Activated CD8-positive, alpha-beta memory T cell treated with anti-CD3 and anti-CD28 coated beads, Interleukin-2, amount 10 ng/mL, durations not matched to agents 7 days and 5 days (primary cell): ENCODE measurements at regions of chr3 and their contacts with region 1.

Region 1: DNA sequence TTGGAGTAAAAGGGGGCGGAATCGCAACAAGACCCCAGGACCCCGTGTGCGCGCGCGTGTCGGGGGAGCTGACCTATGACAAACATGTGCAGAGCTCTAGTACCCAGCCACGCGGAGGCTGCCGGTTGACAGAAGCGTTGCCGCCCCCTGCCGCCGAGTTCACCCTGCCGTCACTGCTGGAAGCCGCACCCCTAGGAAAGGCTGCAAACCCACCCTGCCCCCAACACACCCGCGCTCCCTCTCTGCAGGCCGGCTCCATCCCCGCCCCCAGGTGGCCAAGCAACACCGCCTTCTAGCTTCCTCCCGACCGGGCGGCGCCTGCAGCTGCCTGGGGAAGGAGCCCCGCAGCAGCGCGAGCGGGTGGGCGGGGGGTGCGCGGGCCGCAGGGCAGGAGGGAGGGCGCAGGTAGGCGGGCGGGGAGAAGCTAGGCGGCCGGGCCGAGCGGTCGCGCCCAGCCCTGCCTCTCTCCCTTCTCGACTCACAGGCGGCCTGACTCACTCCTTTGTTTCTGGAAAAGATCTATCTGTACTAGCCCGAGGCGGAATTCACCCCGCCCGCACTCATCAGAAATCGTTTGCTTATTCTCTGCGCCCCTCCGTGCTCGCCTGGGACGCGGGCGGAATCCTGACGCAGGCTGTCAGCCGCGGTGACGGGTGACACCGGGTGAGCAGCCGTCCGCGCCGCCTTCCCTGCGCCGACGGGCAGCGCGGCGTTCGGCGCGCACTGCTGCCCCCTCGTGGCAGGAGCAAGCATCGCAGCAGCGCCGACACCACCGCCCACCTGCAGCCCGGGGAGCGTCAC is 160.8 kb downstream of the GAP43 start:
- DNase-seq: peak; percentile 94
- ATAC-seq: peak; percentile 90
- H3K4me3 Mint-ChIP-seq: peak overlapping the region; percentile 75
- H3K27ac Mint-ChIP-seq: peak overlapping the region; percentile 95
- H3K4me1 Mint-ChIP-seq: peaks cover 13% of the 10 kb centered on the region
- H3K27me3 Mint-ChIP-seq: peaks cover 4% of the 10 kb centered on the region

Region 2: GRCh38 chr3:115658337-115659181 is 125.6 kb before region 1 on chr3:
- CTCF ChIA-PET with region 1: interaction called, 10 read pairs
- DNase-seq: peak; percentile 81
- ATAC-seq: peak; percentile 92
- H3K4me3 Mint-ChIP-seq: peak overlapping the region; percentile 89
- H3K27ac Mint-ChIP-seq: peak overlapping the region; percentile 91
- H3K4me1 Mint-ChIP-seq: peaks cover 33% of the 10 kb centered on the region
- H3K27me3 Mint-ChIP-seq: peaks cover 5% of the 10 kb centered on the region

Region 3: GRCh38 chr3:115727135-115727534 is 57.0 kb before region 1 on chr3:
- CTCF ChIA-PET with region 1: no interaction called
- DNase-seq: no peak
- ATAC-seq: no peak
- H3K4me3 Mint-ChIP-seq: no peak overlapping the region
- H3K27ac Mint-ChIP-seq: no peak overlapping the region
- H3K4me1 Mint-ChIP-seq: peaks cover 3% of the 10 kb centered on the region
- H3K27me3 Mint-ChIP-seq: peaks cover 20% of the 10 kb centered on the region

Region 4: DNA sequence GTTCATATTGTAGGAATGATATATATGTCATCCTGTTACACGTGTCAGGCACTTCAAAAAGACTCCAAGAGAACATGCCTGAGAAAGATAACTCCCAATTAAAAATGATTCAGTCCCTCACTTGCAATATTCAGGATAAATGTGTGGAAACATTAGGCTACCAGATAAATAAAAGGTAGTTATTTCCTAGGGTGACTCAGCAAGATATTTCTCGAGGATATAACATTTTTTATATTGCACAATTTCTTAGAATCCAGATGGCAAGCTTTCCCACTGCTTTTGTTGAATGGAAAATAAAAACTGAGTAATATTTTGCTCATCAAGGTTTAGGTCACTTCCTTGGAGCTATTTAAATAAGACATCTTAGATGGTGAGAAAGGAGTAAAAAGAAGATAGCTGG is 20.6 kb after region 1 on chr3:
- CTCF ChIA-PET with region 1: interaction called, 14 read pairs
- DNase-seq: no peak
- ATAC-seq: no peak
- H3K4me3 Mint-ChIP-seq: no peak overlapping the region
- H3K27ac Mint-ChIP-seq: no peak overlapping the region
- H3K4me1 Mint-ChIP-seq: peaks cover 6% of the 10 kb centered on the region
- H3K27me3 Mint-ChIP-seq: peaks cover 54% of the 10 kb centered on the region

Region 5: GRCh38 chr3:115814778-115815380 is 30.7 kb after region 1 on chr3:
- CTCF ChIA-PET with region 1: interaction called, 33 read pairs
- DNase-seq: peak; percentile 70
- ATAC-seq: peak; percentile 45
- H3K4me3 Mint-ChIP-seq: no peak overlapping the region
- H3K27ac Mint-ChIP-seq: no peak overlapping the region
- H3K4me1 Mint-ChIP-seq: no peaks in the 10 kb centered on the region
- H3K27me3 Mint-ChIP-seq: peaks cover 19% of the 10 kb centered on the region